Activated naive CD4-positive, alpha-beta T cell treated with anti-CD3 and anti-CD28 coated beads for 36 hours (primary cell): ENCODE measurements at regions of chr1 and their contacts with region 1.

Region 1: GRCh38 chr1:26417111-26417759 is 6.6 kb downstream of the LIN28A start:
- DNase-seq: peak; percentile 92
- H3K4me3 Mint-ChIP-seq: no peak overlapping the region
- H3K27ac Mint-ChIP-seq: no peak overlapping the region
- H3K4me1 Mint-ChIP-seq: no peaks in the 10 kb centered on the region
- H3K27me3 Mint-ChIP-seq: peaks cover 14% of the 10 kb centered on the region

Region 2: GRCh38 chr1:26145041-26145959 is 271.9 kb before region 1 on chr1:
- CTCF ChIA-PET with region 1: interaction called, 14 read pairs
- intact Hi-C with region 1: no loop called
- DNase-seq: peak; percentile 88
- H3K4me3 Mint-ChIP-seq: no peak overlapping the region
- H3K27ac Mint-ChIP-seq: no peak overlapping the region
- H3K4me1 Mint-ChIP-seq: peaks cover 2% of the 10 kb centered on the region
- H3K27me3 Mint-ChIP-seq: no peaks in the 10 kb centered on the region

Region 3: DNA sequence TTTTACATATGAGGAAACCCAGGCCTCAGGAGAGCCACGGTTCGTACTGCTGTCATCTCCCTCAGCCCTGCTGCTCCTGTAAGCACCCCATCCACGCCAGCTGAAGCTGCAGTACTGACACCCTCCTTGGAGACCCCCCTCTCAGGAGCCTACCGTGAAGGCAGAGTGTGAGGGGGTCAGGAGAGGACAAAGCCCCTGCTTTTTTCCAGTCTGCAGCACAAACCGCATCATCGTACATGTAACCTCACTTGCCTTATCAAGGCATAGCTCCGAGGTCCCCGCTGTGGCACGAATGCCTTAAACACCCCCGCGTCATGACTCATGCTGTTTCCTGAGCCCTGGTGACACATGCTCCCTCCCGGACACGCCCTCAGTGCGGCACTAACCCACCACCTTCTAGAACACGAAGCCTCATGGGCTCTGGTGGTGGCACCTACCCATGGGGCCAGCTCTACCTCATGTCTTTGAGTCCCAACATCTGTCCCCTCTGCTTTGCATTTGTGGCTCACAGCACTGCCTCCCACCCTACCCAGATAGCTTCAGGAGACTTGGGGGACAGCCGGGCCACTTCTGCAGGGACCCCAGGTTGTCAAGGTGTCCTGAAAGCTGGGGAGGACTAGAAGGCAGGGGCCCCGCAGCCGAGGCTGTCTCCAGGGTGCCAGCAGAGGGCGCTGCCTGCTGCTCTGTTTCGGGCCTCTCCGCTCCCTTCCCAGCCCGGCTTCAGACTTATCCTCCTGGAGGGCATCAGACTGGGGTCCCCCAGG is 132.5 kb before region 1 on chr1:
- CTCF ChIA-PET with region 1: interaction called, 13 read pairs
- intact Hi-C with region 1: no loop called
- DNase-seq: peak; percentile 96
- H3K4me3 Mint-ChIP-seq: peak overlapping the region; percentile 36
- H3K27ac Mint-ChIP-seq: peak overlapping the region; percentile 92
- H3K4me1 Mint-ChIP-seq: peaks cover 88% of the 10 kb centered on the region
- H3K27me3 Mint-ChIP-seq: no peaks in the 10 kb centered on the region

Region 4: DNA sequence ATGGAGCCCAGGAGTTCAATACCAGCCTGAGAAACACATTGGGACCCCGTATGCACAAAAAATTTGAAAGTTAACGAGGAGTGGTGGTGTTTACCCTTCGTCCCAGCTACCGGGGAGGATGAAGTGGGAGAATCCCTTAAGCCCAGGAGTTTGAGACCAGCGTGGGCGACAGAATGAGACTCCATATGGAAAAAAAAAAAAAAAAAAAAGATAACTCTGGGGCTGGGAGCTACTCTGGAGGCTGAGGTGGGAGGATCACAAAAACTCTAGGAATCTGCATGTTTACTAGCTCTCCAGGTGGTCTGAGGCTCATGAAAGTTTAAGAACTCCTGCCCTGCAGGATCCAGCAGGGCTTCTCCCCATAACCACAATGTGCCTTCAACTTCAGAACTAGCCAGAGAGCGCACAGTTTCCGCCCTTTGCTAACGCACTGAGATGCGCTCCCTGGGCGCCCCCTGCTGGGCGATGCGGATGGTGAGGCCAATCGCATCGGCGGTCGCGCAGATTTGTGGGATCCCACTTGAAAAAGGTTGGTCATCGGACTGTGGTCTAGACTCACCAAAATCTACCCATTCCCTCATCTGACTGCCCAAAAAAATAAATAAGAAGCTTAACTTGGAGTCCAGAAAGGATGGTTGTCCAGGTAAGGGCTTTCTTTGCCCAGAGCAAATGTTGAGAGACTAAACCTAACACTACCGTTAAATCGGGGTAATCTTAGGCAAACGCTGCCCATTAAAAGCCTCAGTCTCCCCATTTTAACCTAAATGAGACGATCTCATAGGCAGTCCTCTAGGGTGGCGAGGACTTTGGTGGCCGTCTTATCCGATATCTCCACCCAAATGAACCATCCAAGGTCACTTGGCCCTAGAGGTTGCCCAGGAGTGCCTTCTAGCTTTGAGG is 53.4 kb before region 1 on chr1:
- CTCF ChIA-PET with region 1: interaction called, 42 read pairs
- intact Hi-C with region 1: loop called (anchors 2 kb)
- DNase-seq: peak; percentile 90
- H3K4me3 Mint-ChIP-seq: no peak overlapping the region
- H3K27ac Mint-ChIP-seq: no peak overlapping the region
- H3K4me1 Mint-ChIP-seq: peaks cover 32% of the 10 kb centered on the region
- H3K27me3 Mint-ChIP-seq: peaks cover 6% of the 10 kb centered on the region

Region 5: GRCh38 chr1:26378088-26378878 is 39.0 kb before region 1 on chr1:
- CTCF ChIA-PET with region 1: interaction called, 13 read pairs
- intact Hi-C with region 1: no loop called
- DNase-seq: peak; percentile 66
- H3K4me3 Mint-ChIP-seq: no peak overlapping the region
- H3K27ac Mint-ChIP-seq: peak overlapping the region; percentile 53
- H3K4me1 Mint-ChIP-seq: peaks cover 54% of the 10 kb centered on the region
- H3K27me3 Mint-ChIP-seq: no peaks in the 10 kb centered on the region

Region 6: DNA sequence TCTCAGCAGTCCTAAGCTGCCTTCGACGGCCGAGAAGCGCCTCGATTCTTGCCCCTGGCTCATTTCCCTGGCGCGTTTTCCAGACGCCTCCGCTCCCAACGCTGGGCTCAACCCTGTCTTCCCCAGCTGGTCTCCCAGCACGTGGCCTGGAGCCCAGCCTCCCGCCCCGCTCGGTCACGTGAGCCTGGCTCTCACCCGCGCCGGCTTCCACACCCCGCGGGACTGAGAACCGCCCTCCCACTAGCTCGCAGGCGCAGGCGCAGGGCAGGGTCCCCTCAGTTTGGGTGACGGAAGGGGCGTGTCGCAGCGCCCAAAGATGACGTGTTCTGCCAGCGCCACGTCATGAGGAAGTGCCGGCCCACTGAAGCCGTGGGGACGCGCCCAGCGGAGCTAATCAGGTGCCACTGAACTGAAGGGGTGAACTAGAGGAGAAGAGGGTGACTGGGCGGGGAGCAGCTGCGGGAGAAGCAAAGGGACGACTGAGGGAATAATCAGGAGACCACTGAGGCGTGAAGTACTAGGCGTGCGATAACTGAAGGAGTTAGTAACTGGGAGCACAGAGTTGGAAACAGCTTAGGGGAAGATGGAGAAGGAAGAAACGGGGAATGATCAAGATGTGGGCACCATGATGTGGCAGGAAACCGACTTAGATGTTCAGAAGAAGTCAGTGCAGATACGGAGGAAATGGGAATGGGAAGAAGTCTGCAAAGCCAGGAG is 14.9 kb after region 1 on chr1 and contains the start of gene DHDDS:
- CTCF ChIA-PET with region 1: interaction called, 29 read pairs
- intact Hi-C with region 1: no loop called
- DNase-seq: peak; percentile 99
- H3K4me3 Mint-ChIP-seq: peak within 1 kb of the TSS; percentile 93
- H3K27ac Mint-ChIP-seq: peak within 1 kb of the TSS; percentile 80
- H3K4me1 Mint-ChIP-seq: peaks cover 26% of the 10 kb centered on the region
- H3K27me3 Mint-ChIP-seq: no peaks in the 10 kb centered on the region
- total RNA-seq, gene DHDDS: 26.2 to 26.3 TPM

Region 7: DNA sequence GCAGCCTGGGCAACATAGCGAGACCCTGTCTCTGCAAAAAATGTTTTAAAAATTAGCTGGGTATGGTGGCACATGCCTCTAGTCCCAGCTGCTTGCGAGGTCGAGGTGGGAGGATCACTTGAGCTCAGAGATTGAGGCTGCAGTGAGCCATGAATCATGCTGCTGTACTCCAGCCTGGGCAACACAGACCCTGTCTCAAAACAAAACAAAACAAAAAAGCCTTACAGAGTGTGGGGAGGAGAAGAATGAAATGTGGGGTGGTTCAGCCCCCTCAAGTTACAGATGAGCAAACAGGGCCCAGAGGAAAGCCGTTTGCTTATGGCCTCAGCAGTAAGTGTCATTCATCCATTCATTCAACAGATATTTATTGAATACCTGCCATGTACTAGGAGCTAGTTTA is 153.1 kb after region 1 on chr1:
- CTCF ChIA-PET with region 1: no interaction called
- intact Hi-C with region 1: no loop called
- DNase-seq: no peak
- H3K4me3 Mint-ChIP-seq: no peak overlapping the region
- H3K27ac Mint-ChIP-seq: no peak overlapping the region
- H3K4me1 Mint-ChIP-seq: peaks cover 10% of the 10 kb centered on the region
- H3K27me3 Mint-ChIP-seq: no peaks in the 10 kb centered on the region

Region 8: GRCh38 chr1:26618561-26618960 is 201.3 kb after region 1 on chr1:
- CTCF ChIA-PET with region 1: no interaction called
- intact Hi-C with region 1: no loop called
- DNase-seq: no peak
- H3K4me3 Mint-ChIP-seq: no peak overlapping the region
- H3K27ac Mint-ChIP-seq: no peak overlapping the region
- H3K4me1 Mint-ChIP-seq: peaks cover 27% of the 10 kb centered on the region
- H3K27me3 Mint-ChIP-seq: no peaks in the 10 kb centered on the region